Right ventricle myocardium inferior (tissue), 1 donor: ENCODE measurements at regions of chr3 and their contacts with region 1.

Region 1: GRCh38 chr3:177005718-177006405 is 191.4 kb downstream of the TBL1XR1 start:
- DNase-seq: no peak
- ATAC-seq: no peak

Region 2: GRCh38 chr3:176941689-176942088 is 64.2 kb before region 1 on chr3:
- intact Hi-C with region 1: no loop called
- DNase-seq: no peak
- ATAC-seq: no peak

Region 3: GRCh38 chr3:176978441-176978840 is 27.4 kb before region 1 on chr3:
- intact Hi-C with region 1: loop called (anchors 1 kb)
- DNase-seq: no peak
- ATAC-seq: no peak